Right ventricle myocardium inferior (tissue), 1 donor: ENCODE measurements at regions of chr5 and their contacts with region 1.

Region 1: GRCh38 chr5:136062366-136063274 is 33.8 kb downstream of the TGFBI start:
- DNase-seq: no peak
- ATAC-seq: no peak

Region 2: DNA sequence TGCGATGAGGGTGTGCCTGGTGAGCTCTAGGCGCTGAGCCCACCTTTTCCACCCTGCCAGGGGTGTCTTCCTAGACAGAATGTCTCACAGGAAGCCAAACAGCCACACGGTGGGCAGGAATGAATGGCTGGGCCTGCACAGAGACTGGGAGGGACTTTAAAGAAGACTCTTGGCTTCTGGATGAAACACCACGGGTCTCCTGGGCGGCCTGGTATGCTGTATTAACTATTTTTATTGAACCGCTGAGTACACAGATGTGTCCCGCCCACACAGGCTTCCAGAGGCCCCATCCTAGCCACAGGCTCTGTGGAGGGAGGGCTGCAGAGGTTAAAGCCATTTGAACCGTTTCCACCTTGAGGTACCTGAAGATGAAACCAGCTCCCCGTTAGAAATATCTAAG is 368.6 kb before region 1 on chr5:
- intact Hi-C with region 1: no loop called
- DNase-seq: no peak
- ATAC-seq: no peak

Region 3: DNA sequence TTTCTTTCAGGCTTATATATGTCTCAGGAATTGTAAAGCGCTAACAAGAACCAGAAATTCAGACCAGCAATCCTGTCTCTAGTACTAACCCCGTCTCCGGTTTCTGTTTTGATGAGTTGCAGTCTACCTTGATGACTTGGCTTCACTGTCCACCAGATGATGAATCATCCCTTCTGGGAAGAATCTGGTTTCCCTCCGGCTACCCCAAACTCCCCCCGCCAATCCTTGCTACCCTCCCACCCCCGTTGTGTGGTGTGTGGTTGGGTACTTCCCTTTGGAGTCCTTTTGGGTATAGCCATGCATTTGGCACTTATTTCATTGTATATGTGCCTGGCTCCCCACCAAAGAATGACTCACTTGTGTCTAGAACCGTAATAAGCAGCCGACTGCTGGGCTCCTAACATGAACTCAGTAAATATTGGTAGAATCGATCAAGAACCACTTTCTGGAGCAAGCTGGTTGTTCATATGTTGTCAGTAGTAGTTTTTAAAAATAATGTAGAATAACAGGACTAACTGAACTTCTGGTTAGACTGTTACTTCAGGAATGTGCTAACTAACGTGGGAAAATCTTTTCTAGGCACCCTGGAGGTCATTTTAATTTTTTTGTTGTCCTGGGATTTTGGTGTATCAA is 42.1 kb before region 1 on chr5:
- intact Hi-C with region 1: loop called (anchors 5 kb)
- DNase-seq: no peak
- ATAC-seq: no peak